OCI-LY7 (cell line): ENCODE measurements at regions of chr7 and their contacts with region 1.

Region 1: GRCh38 chr7:92076534-92076933 is 57.7 kb downstream of the CYP51A1 start:
- DNase-seq: no peak
- H3K4me3 ChIP-seq: no peak overlapping the region
- H3K27ac ChIP-seq: no peak overlapping the region
- H3K4me1 ChIP-seq: no peaks in the 10 kb centered on the region
- CTCF ChIP-seq: no peak

Region 2: GRCh38 chr7:92092210-92092609 is 15.7 kb after region 1 on chr7:
- CTCF ChIA-PET with region 1: no interaction called
- POLR2A ChIA-PET with region 1: interaction called, 10 read pairs
- intact Hi-C with region 1: no loop called
- DNase-seq: no peak
- H3K4me3 ChIP-seq: no peak overlapping the region
- H3K27ac ChIP-seq: no peak overlapping the region
- H3K4me1 ChIP-seq: no peaks in the 10 kb centered on the region
- CTCF ChIP-seq: no peak